Colonic mucosa (tissue), 4 donors: ENCODE measurements at regions of chrX and their contacts with region 1.

Region 1: GRCh38 chrX:39137363-39137954 is 336.2 kb downstream of the MID1IP1 start:
- DNase-seq: no peak
- H3K4me3 ChIP-seq: no peak overlapping the region
- H3K27ac ChIP-seq: no peak overlapping the region
- H3K4me1 ChIP-seq: no peaks in the 10 kb centered on the region
- H3K27me3 ChIP-seq: no peaks in the 10 kb centered on the region
- CTCF ChIP-seq: no peak

Region 2: DNA sequence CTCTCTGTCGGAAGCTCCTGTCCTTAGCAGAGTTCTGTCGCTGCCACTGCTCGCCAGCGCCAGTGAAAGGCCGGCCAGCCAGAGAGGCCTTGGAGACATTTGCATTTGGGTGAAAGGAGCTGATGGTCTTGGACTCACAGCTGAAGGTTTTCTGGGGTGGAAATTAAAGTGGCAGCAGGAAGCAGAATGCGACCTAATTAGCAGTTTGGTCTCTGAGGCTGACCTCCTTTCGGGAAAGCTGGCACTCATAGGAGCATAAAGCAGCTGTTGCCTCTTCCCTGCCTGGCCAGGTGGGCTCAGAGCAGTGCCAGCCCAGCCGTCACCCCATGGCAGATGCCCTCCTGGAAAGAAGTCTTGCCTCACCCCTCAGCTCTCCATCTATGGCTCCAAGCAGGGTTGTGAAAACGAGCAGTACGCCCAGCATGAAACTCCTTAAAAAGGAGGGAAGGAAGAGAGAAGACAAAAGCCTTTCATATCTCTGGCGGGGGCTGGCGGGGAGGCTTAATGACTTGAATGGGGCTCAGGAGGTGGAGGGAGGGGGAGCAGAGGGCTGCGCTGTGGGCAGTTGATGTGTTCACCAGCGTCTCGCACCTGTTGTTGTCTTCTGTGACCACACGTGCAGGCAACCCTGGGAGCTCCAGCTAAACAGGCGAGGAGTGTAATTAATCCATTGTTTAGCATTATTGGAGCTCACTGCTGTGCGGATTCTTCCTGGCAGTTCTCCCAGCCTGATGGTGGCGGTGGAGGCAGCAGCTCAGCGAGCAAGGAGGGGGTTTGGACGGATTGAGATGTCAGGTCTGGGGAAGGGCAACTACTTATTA is 72.2 kb before region 1 on chrX:
- intact Hi-C with region 1: loop called (anchors 2 kb)
- DNase-seq: no peak
- H3K4me3 ChIP-seq: no peak overlapping the region
- H3K27ac ChIP-seq: no peak overlapping the region
- H3K4me1 ChIP-seq: no peaks in the 10 kb centered on the region
- H3K27me3 ChIP-seq: no peaks in the 10 kb centered on the region
- CTCF ChIP-seq: no peak

Region 3: GRCh38 chrX:39309018-39309635 is 171.7 kb after region 1 on chrX:
- intact Hi-C with region 1: no loop called
- DNase-seq: no peak
- H3K4me3 ChIP-seq: no peak overlapping the region
- H3K27ac ChIP-seq: no peak overlapping the region
- H3K4me1 ChIP-seq: no peaks in the 10 kb centered on the region
- H3K27me3 ChIP-seq: peaks cover 5% of the 10 kb centered on the region
- CTCF ChIP-seq: no peak